Activated T-helper 1 cell treated with anti-CD3 and anti-CD28 coated beads, Interleukin-12 subunit alpha, Interleukin-12 subunit beta, Interleukin-2, Interleukin-4 antibody, amounts not matched to agents 30 ng/mL and 10 ng/mL and 1 ng/mL, durations not matched to agents 14 hours and 24 hours and 36 hours (primary cell): ENCODE measurements at regions of chr6 and their contacts with region 1.

Region 1: GRCh38 chr6:146850238-146850896 is 251.6 kb downstream of the ADGB start:
- DNase-seq: no peak
- H3K4me3 Mint-ChIP-seq: no peak overlapping the region
- H3K27ac Mint-ChIP-seq: peak overlapping the region; percentile 61
- H3K4me1 Mint-ChIP-seq: peaks cover 39% of the 10 kb centered on the region
- H3K27me3 Mint-ChIP-seq: no peaks in the 10 kb centered on the region

Region 2: DNA sequence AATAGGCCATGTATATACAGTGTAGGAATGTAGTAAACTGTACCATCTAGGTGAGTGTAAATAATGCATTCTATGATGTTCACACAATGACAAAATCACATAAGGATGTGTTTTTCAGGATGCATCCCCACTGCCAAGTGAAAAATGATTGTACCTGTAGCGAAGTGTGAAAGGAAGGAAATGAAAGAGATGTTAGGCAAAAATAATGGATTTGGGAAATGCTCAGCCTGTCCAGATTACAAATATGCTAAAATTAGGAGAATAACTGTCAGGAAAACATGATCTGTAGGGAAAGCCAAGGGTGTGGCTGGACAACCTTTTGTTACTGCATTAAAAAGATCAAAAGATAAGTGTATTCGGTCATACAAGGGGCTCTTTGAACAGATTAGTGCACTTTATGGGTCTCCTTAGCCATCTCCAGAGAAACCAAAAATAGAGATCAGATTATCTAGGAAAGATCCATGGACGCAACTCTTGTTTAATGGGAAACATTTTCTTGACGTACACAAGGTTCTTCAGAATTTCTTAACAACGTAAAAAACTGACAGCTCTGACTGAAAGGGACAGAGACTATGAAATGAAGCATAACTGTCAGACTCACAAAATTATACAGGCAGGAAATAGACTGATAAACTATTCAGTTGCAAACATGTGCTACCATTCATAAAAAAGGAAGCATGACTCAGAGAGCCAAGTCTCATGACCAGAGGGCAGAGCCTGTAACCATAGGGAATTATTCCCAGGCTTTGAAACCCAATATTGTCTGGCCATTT is 560.4 kb before region 1 on chr6:
- intact Hi-C with region 1: no loop called
- DNase-seq: no peak
- H3K4me3 Mint-ChIP-seq: no peak overlapping the region
- H3K27ac Mint-ChIP-seq: no peak overlapping the region
- H3K4me1 Mint-ChIP-seq: no peaks in the 10 kb centered on the region
- H3K27me3 Mint-ChIP-seq: no peaks in the 10 kb centered on the region

Region 3: DNA sequence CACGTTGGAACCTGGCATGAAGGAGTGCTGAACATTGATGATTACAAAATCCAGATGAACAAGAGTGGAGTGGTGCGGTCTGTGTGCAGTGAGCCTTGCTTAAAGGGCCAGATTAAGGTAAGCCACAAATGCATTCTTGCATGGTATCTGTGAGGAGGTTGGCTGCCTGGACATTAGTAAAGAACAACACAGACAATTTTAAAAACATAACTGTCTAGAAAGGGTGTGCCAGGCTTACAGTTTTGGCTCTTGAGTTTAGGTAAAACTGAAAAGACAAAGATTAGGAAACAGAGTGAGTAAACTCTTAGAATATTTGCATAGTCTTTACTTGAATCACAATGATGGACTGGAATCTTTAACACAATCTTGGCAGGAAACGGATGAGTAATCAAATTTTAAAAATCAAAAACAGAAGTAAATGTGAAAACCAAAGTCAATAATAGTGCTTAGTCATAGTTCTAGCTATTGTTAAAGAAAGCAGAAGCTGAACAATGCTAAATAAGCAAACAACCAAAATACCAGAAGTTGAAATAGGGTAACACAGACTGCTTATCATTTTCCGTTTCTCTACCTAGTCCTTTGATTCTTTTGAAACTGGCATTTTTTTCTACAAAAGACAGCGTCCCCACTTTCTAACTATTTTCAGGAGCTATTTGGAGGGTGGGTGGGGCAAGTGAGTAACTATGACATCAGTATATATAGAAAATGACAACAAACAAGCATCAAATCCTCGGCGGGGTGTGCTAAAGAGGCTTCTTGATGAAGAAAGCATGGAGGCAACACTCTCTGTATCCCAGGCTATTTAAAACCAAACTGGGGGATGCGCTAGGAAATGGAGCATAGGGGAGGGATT is 492.6 kb before region 1 on chr6:
- intact Hi-C with region 1: loop called (anchors 2 kb)
- DNase-seq: no peak
- H3K4me3 Mint-ChIP-seq: no peak overlapping the region
- H3K27ac Mint-ChIP-seq: peak overlapping the region; percentile 74
- H3K4me1 Mint-ChIP-seq: peaks cover 13% of the 10 kb centered on the region
- H3K27me3 Mint-ChIP-seq: no peaks in the 10 kb centered on the region

Region 4: GRCh38 chr6:146819596-146820320 is 30.6 kb before region 1 on chr6:
- intact Hi-C with region 1: no loop called
- DNase-seq: no peak
- H3K4me3 Mint-ChIP-seq: no peak overlapping the region
- H3K27ac Mint-ChIP-seq: no peak overlapping the region
- H3K4me1 Mint-ChIP-seq: no peaks in the 10 kb centered on the region
- H3K27me3 Mint-ChIP-seq: peaks cover 4% of the 10 kb centered on the region

Region 5: DNA sequence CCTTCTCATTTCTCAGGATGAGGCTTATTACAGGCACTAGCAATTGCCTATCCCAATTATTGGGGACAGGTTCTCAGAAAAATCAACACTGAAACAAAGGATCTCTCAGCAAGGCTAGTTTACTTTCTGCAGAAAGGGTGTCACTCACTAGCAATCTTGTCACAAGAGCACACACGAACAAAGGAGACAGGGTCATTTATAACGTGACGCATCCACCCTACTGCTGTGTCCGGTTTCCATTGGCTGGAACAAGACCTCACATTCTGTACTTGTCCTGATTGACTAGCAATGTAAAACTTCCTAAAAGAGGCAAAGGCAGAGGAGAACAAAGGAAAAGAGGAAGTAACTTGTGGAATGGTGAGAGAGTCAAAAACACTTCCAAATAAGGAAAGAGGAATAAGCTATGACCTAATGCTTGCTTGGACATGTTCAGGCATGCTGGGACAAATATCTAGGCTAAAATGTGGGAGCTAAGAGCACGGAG is 193.7 kb after region 1 on chr6:
- intact Hi-C with region 1: no loop called
- DNase-seq: no peak
- H3K4me3 Mint-ChIP-seq: no peak overlapping the region
- H3K27ac Mint-ChIP-seq: no peak overlapping the region
- H3K4me1 Mint-ChIP-seq: no peaks in the 10 kb centered on the region
- H3K27me3 Mint-ChIP-seq: peaks cover 1% of the 10 kb centered on the region

Region 6: DNA sequence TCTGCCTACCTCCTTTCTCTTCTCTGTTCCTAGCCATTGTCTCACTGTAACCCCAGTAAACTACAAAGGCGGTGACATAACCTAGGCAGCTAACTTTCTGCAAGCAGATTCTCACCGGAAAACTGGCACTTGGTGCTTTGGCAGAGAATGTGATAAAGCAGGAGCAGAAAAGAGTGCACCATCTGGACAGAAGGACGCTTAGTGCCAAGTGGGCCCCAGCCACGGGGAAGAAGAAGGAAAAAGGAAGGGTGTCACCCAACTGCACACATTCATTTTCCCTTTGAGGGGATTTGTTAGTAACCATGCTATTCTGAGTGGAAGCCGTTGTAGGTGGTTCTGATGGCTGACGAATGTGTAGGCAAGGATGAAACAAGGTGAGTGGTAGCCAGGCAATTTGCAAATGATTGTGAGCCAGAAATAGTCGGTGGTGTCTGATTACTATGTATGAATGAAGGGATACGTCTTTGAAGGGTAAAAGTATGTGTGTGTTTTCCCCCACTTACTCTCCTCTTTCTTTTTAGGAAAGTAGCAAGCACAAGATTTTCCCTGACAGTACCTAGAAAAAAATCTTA is 205.5 kb after region 1 on chr6:
- intact Hi-C with region 1: loop called (anchors 5 kb)
- DNase-seq: no peak
- H3K4me3 Mint-ChIP-seq: peak overlapping the region; percentile 27
- H3K27ac Mint-ChIP-seq: peak overlapping the region; percentile 64
- H3K4me1 Mint-ChIP-seq: peaks cover 12% of the 10 kb centered on the region
- H3K27me3 Mint-ChIP-seq: peaks cover 2% of the 10 kb centered on the region

Region 7: GRCh38 chr6:147322299-147323162 is 472.2 kb after region 1 on chr6:
- intact Hi-C with region 1: loop called (anchors 1 kb)
- DNase-seq: peak; percentile 17
- H3K4me3 Mint-ChIP-seq: peak overlapping the region; percentile 66
- H3K27ac Mint-ChIP-seq: peak overlapping the region; percentile 87
- H3K4me1 Mint-ChIP-seq: peaks cover 18% of the 10 kb centered on the region
- H3K27me3 Mint-ChIP-seq: no peaks in the 10 kb centered on the region